AG04449 (cell line): ENCODE measurements at regions of chr4 and their contacts with region 1.

Region 1: GRCh38 chr4:70183168-70183939 is 12.2 kb upstream of the ODAM start:
- DNase-seq: no peak
- H3K4me3 ChIP-seq: no peak overlapping the region
- CTCF ChIP-seq: peak; percentile 51

Region 2: DNA sequence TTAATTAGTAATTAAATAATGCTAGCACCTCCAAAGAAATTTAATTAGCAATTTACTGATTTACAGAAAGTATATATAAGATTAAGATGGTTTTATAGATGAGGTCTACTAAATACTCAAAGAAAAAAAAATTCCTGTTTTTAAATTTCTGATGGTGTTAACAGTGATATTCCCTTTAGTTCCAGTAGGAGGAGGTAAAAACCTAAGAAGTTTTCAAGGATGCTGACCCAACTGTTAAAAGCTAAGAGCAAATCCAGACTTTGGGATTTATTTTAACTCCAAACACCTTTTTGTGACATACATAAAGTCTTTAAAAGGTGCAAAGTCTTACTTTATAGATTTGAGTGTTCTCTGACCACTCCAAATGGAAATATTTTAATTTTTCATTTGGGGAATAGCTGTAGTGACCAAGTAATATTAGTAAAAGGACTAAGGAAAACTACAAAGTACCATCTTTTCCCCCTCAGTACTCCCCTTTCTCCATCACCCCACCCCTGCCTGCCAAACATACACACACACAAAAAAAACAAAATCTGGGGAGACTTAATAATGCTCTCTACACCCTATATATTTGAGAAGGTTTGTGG is 286.7 kb before region 1 on chr4:
- CTCF ChIA-PET with region 1: interaction called, 12 read pairs
- POLR2A ChIA-PET with region 1: no interaction called
- DNase-seq: no peak
- H3K4me3 ChIP-seq: no peak overlapping the region
- CTCF ChIP-seq: no peak

Region 3: DNA sequence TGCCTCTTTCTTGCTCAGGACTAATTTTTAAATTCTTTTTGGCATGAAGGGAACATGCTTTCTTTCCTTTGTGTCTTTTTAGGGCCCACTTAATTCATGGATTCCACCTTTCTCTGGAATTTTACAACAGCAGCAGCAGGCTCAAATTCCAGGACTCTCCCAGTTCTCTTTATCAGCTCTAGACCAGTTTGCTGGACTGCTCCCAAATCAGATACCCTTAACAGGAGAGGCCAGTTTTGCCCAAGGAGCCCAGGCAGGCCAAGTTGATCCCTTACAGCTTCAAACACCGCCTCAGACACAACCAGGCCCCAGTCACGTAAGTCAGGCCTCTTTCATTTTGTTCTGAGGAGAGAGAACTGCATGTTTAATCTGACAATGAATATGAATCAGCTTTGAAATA is 14.5 kb after region 1 on chr4:
- CTCF ChIA-PET with region 1: interaction called, 11 read pairs
- POLR2A ChIA-PET with region 1: no interaction called
- DNase-seq: no peak
- H3K4me3 ChIP-seq: no peak overlapping the region
- CTCF ChIP-seq: no peak

Region 4: DNA sequence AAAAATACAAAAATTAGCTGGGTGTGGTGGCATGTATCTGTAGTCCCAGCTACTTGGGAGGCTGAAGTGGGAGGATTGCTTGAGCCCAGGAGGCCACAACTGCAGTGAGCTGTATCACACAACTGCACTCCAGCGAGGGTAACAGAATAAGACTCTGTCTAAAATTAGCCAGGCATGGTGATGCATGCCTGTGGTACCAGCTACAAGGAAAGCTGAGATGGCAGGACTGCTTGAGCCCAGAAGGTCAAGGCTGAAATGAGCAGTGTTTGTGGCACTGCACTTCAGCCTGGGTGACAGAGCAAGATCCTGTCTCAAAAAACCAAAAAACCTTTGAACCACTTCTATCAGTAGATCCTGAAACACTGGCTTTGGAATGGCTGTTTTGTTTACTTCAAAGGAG is 646.1 kb after region 1 on chr4:
- CTCF ChIA-PET with region 1: no interaction called
- POLR2A ChIA-PET with region 1: no interaction called
- DNase-seq: no peak
- H3K4me3 ChIP-seq: no peak overlapping the region
- CTCF ChIP-seq: no peak